T-cell (primary cell): ENCODE measurements at regions of chr19 and their contacts with region 1.

Region 1: DNA sequence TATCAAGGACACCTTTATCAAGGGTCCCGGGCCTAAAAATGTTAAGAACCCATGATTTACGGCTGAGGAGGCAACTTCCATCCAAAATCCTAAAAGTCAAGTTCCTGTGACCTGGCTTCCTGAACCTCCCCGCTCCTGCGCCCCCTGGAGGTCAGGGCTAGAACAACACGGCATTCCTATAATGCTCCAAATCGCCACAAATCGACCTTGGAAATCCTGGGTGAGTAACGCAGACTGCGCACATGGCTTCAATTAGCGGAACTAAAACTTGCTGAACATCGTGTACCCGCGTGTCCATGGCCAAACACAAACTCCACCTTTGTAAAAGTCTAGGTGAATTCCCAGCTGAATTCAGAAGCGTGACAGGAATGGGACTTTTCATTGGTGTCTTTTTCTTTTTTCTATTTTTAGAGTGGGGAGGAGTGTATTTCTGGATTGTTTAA is 4.3 kb upstream of the C5AR1 start:
- DNase-seq: peak in 29 of 35 experiments; percentile 12 to 72 (median 37)
- ATAC-seq: peak in 1 of 4 experiments; percentile 32
- H3K4me3 ChIP-seq: no peak overlapping the region
- H3K4me3 Mint-ChIP-seq: no peak overlapping the region
- H3K27ac ChIP-seq: no peak overlapping the region
- H3K27ac Mint-ChIP-seq: peak overlapping the region in 1 of 2 donors; percentile 66
- H3K4me1 ChIP-seq: peaks cover 0 to 7% of the 10 kb centered on the region in 2 experiments
- H3K4me1 Mint-ChIP-seq: peaks cover 6 to 13% (median 9%) of the 10 kb centered on the region in 3 donors
- H3K27me3 ChIP-seq: peaks cover 0 to 26% of the 10 kb centered on the region in 2 experiments
- H3K27me3 Mint-ChIP-seq: peaks cover 13 to 26% of the 10 kb centered on the region in 2 donors

Region 2: GRCh38 chr19:46983097-46983496 is 322.2 kb before region 1 on chr19:
- CTCF ChIA-PET with region 1: interaction called in 1 of 2 experiments, 11 read pairs
- POLR2A ChIA-PET with region 1: no interaction called
- DNase-seq: no peak
- ATAC-seq: no peak
- H3K4me3 ChIP-seq: no peak overlapping the region
- H3K4me3 Mint-ChIP-seq: no peak overlapping the region
- H3K27ac ChIP-seq: no peak overlapping the region
- H3K27ac Mint-ChIP-seq: no peak overlapping the region
- H3K4me1 ChIP-seq: peaks cover 0 to 34% of the 10 kb centered on the region in 2 experiments
- H3K4me1 Mint-ChIP-seq: peaks cover 23 to 30% (median 24%) of the 10 kb centered on the region in 3 donors
- H3K27me3 ChIP-seq: no peaks in the 10 kb centered on the region
- H3K27me3 Mint-ChIP-seq: no peaks in the 10 kb centered on the region

Region 3: DNA sequence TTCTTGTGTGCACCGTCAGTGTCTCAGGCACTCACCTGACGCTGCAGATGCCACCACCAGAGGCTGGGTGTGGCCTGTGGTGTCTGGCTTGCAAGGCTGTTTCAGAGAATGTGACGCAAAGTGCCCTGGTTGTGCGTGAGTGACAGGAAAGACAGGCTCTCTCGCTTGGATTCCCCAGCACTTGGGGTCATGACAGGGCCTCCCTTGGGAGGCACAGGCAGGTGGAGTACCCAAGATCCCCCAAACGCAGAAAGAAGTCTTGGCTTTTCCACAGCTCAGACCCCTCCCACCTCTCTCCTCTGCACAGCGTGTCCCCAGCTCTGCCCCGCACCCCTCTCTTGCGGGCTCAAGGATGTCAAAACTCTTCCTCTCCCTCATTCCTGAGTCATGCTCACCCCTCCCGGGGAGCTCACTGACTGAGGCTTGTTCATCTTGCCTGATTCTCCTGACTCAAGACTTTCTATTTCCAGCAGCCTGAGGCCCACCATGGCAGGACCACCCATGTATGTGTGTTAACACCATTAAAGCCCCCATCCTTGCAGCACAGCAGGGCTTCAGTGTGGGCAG is 64.8 kb after region 1 on chr19:
- CTCF ChIA-PET with region 1: no interaction called
- POLR2A ChIA-PET with region 1: no interaction called
- DNase-seq: peak in 11 of 35 experiments; percentile 4 to 53 (median 15)
- ATAC-seq: no peak
- H3K4me3 ChIP-seq: no peak overlapping the region
- H3K4me3 Mint-ChIP-seq: no peak overlapping the region
- H3K27ac ChIP-seq: no peak overlapping the region
- H3K27ac Mint-ChIP-seq: no peak overlapping the region
- H3K4me1 ChIP-seq: no peaks in the 10 kb centered on the region
- H3K4me1 Mint-ChIP-seq: no peaks in the 10 kb centered on the region
- H3K27me3 ChIP-seq: no peaks in the 10 kb centered on the region
- H3K27me3 Mint-ChIP-seq: no peaks in the 10 kb centered on the region